Right ventricle myocardium superior (tissue), 1 donor: ENCODE measurements at regions of chr1 and their contacts with region 1.

Region 1: GRCh38 chr1:162612606-162613400 is 19.5 kb upstream of the DDR2 start:
- DNase-seq: peak; percentile 66
- ATAC-seq: peak; percentile 76

Region 2: DNA sequence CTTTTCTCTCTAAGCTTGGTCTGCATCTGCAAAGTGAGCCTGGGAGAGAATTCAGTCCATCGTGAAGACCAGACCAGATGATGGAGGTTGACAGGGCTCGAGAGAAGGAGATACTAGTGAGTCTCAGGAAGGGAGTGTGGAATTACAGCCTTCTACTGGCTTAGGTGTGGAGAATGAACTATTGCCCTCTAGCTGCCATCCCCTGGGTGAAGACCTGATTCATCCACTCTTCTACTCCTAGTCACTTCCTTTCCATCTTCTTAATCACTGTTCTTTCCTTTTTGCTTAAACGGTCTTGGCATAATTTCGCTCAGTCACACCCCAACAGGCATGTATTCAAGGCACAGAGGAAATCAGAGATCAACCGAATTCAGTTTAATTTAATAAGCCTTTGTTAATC is 143.7 kb after region 1 on chr1:
- intact Hi-C with region 1: loop called (anchors 10 kb)
- DNase-seq: no peak
- ATAC-seq: no peak

Region 3: DNA sequence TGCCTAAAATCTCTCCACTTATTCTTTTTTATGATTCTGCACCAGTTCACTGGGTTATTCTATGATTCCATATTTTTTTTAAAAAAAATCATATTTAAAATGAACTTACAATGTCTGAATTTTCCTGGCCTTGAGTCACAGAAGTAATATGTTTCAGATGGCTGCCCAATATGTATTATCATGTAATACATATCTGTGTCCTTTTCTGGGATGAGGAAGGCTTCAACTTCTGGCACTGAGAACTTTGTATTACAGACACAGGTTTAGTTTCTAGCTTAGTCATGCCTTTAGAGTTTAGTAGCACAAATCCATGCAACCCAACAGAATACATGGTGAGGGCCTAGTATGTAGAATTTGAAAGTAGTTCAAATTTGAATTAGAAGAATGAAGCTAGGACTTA is 169.9 kb after region 1 on chr1:
- intact Hi-C with region 1: loop called (anchors 10 kb)
- DNase-seq: no peak
- ATAC-seq: no peak